B cell (primary cell): ENCODE measurements at regions of chr2 and their contacts with region 1.

Region 1: DNA sequence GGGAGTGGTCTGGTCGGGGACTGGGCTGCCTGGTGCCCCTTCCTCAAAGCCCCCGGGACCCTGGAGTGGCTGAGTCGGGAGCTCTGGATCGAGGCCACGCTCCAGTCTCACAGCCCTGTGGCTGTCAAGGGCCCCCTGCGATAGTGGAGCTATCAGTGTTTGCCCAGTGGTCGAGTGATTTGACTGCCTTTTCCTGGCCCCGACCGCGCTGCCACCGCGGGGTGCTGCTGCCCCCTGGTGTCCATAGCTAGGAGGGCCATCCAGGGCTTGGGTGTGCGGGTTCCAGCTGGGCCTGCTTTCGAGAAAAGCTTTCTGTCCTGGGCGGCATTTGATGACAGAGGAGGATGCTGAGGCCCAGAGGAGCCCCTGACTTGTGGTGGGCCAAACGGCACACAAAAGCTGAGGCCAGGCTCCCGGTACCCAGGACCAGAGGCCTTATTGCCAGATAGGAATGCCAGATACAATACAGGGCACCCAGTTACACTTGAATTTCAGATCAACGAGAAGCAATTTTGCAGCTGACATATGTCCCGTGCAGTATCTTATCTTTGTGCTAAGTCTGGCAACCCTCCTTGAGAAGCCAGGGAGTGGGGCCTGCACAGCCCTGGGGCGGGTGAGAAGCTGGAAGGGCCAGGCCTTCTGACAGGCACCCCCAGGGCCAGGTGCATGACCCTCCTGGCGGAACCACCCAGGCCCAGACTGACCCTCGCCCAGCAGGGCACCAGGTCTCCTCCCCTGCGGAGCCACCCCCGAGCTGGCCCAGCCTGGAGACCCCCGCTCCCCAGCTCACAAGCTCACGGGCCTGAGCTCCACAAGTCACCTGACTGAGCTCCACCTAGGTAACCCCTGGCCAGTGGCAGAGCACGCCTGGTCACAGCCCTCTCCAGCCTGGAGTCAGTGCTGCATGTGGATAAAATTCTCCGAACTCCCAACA is 13.0 kb downstream of the ODC1 start:
- DNase-seq: peak; percentile 88
- ATAC-seq: peak; percentile 79
- H3K4me3 ChIP-seq: no peak overlapping the region
- H3K4me3 Mint-ChIP-seq: no peak overlapping the region
- H3K27ac ChIP-seq: no peak overlapping the region
- H3K27ac Mint-ChIP-seq: peak overlapping the region; percentile 74
- H3K4me1 ChIP-seq: peaks cover 12 to 18% of the 10 kb centered on the region in 2 donors
- H3K4me1 Mint-ChIP-seq: peaks cover 19% of the 10 kb centered on the region
- H3K27me3 ChIP-seq: peaks cover 0 to 4% (median 0%) of the 10 kb centered on the region in 4 experiments
- H3K27me3 Mint-ChIP-seq: no peaks in the 10 kb centered on the region
- CTCF ChIP-seq: peak; percentile 93

Region 2: GRCh38 chr2:10122386-10123280 is 312.5 kb before region 1 on chr2 and contains the start of gene RRM2:
- CTCF ChIA-PET with region 1: interaction called, 193 read pairs
- POLR2A ChIA-PET with region 1: interaction called, 4 read pairs
- intact Hi-C with region 1: loop called (anchors 1 kb)
- DNase-seq: peak; percentile 91
- ATAC-seq: peak; percentile 82
- H3K4me3 ChIP-seq: peak within 1 kb of the TSS in 4 of 5 experiments; percentile 42 to 77 (median 54)
- H3K4me3 Mint-ChIP-seq: peak within 1 kb of the TSS; percentile 98
- H3K27ac ChIP-seq: no peak within 1 kb of the TSS
- H3K27ac Mint-ChIP-seq: peak within 1 kb of the TSS; percentile 59
- H3K4me1 ChIP-seq: peaks cover 29 to 32% of the 10 kb centered on the region in 2 donors
- H3K4me1 Mint-ChIP-seq: peaks cover 30% of the 10 kb centered on the region
- H3K27me3 ChIP-seq: peaks cover 0 to 17% (median 8%) of the 10 kb centered on the region in 4 experiments
- H3K27me3 Mint-ChIP-seq: peaks cover 10% of the 10 kb centered on the region
- CTCF ChIP-seq: no peak
- total RNA-seq, gene RRM2: 1.2 and 1.3 TPM in 2 replicates

Region 3: GRCh38 chr2:10141736-10142642 is 293.2 kb before region 1 on chr2:
- CTCF ChIA-PET with region 1: interaction called, 98 read pairs
- POLR2A ChIA-PET with region 1: interaction called, 3 read pairs
- intact Hi-C with region 1: no loop called
- DNase-seq: peak; percentile 53
- ATAC-seq: peak; percentile 88
- H3K4me3 ChIP-seq: no peak overlapping the region
- H3K4me3 Mint-ChIP-seq: no peak overlapping the region
- H3K27ac ChIP-seq: no peak overlapping the region
- H3K27ac Mint-ChIP-seq: no peak overlapping the region
- H3K4me1 ChIP-seq: no peaks in the 10 kb centered on the region
- H3K4me1 Mint-ChIP-seq: no peaks in the 10 kb centered on the region
- H3K27me3 ChIP-seq: no peaks in the 10 kb centered on the region
- H3K27me3 Mint-ChIP-seq: no peaks in the 10 kb centered on the region
- CTCF ChIP-seq: peak; percentile 37

Region 4: DNA sequence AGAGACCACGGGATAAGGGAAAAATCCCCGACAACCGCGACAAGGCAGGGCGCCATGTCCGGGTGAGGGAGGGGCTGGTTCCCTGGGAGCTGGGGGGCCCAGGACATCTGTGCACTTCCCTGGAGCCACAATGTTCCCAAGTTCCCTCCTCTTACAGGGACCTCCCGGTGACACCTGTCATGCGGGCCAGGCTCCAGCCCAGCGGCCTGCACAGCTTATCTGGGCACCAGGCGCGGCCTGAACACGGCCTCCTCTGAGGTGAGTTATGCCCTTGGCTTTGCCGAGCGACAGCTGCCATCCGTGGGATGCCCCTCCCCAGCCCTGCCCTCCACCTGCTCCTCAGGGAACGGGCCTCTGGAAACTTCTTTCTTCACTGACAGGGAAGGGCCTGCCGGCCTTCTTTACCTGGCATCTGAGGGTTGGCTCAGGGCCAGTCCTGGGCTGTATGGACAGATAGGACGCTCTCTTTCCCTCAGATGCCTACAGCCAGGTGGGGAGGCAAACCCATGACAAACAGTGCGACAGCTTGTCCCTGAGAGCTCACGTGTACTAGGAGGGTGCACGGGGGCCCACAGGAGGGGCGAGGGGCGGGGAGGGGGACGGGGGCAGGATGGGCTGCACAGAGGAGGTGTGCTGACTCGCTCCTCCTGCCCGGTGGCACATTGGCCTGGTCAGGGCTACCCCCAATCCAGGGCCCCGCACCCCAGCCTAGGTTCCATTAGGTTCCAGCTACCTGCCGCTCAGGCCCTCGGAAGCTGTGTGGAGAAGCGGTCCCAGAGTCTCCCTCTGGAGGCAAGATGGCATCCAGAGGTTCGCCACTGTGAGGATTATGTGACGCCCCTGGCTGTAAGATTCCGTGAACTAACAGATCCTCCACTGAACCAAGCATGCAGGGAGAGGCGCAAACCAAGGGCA is 167.3 kb before region 1 on chr2:
- CTCF ChIA-PET with region 1: interaction called, 131 read pairs
- POLR2A ChIA-PET with region 1: interaction called, 5 read pairs
- intact Hi-C with region 1: no loop called
- DNase-seq: no peak
- ATAC-seq: no peak
- H3K4me3 ChIP-seq: no peak overlapping the region
- H3K4me3 Mint-ChIP-seq: no peak overlapping the region
- H3K27ac ChIP-seq: no peak overlapping the region
- H3K27ac Mint-ChIP-seq: no peak overlapping the region
- H3K4me1 ChIP-seq: peaks cover 3 to 8% of the 10 kb centered on the region in 2 donors
- H3K4me1 Mint-ChIP-seq: peaks cover 3% of the 10 kb centered on the region
- H3K27me3 ChIP-seq: no peaks in the 10 kb centered on the region
- H3K27me3 Mint-ChIP-seq: peaks cover 4% of the 10 kb centered on the region
- CTCF ChIP-seq: no peak

Region 5: GRCh38 chr2:10414000-10414451 is 21.1 kb before region 1 on chr2:
- CTCF ChIA-PET with region 1: interaction called, 207 read pairs
- POLR2A ChIA-PET with region 1: interaction called, 6 read pairs
- intact Hi-C with region 1: loop called (anchors 1 kb)
- DNase-seq: peak; percentile 49
- ATAC-seq: no peak
- H3K4me3 ChIP-seq: no peak overlapping the region
- H3K4me3 Mint-ChIP-seq: no peak overlapping the region
- H3K27ac ChIP-seq: no peak overlapping the region
- H3K27ac Mint-ChIP-seq: peak overlapping the region; percentile 63
- H3K4me1 ChIP-seq: peaks cover 32 to 70% of the 10 kb centered on the region in 2 donors
- H3K4me1 Mint-ChIP-seq: peaks cover 60% of the 10 kb centered on the region
- H3K27me3 ChIP-seq: no peaks in the 10 kb centered on the region
- H3K27me3 Mint-ChIP-seq: no peaks in the 10 kb centered on the region
- CTCF ChIP-seq: no peak

Region 6: GRCh38 chr2:10835052-10835970 is 400.2 kb after region 1 on chr2:
- CTCF ChIA-PET with region 1: no interaction called
- POLR2A ChIA-PET with region 1: no interaction called
- intact Hi-C with region 1: no loop called
- DNase-seq: peak; percentile 68
- ATAC-seq: peak; percentile 71
- H3K4me3 ChIP-seq: no peak overlapping the region
- H3K4me3 Mint-ChIP-seq: no peak overlapping the region
- H3K27ac ChIP-seq: no peak overlapping the region
- H3K27ac Mint-ChIP-seq: no peak overlapping the region
- H3K4me1 ChIP-seq: peaks cover 10 to 12% of the 10 kb centered on the region in 2 donors
- H3K4me1 Mint-ChIP-seq: peaks cover 8% of the 10 kb centered on the region
- H3K27me3 ChIP-seq: peaks cover 0 to 45% (median 8%) of the 10 kb centered on the region in 4 experiments
- H3K27me3 Mint-ChIP-seq: peaks cover 47% of the 10 kb centered on the region
- CTCF ChIP-seq: peak; percentile 80